Heart left ventricle (tissue), 16 donors: ENCODE measurements at regions of chr11 and their contacts with region 1.

Region 1: DNA sequence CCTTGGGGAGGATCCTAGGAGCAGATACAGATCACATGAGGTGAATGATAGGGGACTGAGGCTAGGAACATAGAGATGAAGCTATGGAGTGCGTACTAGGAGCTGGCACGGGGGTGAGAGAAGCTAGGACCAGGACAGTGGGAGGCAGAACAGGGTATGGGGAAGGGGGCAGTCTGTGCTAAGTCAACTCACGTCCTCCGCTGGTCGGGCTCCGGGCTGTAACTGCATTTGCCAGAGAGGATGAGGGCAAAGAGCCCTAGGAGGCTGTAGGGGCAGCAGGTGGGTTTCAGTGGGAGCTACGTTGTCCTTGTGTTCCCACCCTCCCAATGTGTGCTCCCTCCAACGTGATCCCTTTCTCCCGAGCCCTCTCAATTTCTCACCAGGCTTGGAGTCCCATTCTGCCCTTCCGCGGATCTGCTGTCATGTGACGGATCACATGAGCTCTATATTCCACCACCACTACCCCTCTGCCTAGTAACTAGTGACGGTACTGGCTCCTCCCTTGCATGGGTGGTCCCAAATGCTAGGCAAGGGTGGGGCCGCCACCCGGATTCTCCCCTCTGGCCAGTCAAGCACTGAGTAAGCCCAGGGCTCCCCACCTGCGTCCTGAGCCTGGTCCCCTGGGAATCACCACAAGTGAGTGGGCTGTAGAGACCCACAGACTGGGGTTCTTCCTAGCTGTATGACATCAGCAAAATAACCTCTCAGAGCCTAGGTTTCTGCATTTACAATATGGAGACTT is at the start of gene TPP1:
- DNase-seq: peak; percentile 92 to 95 (median 94)
- ATAC-seq: peak; percentile 94 to 98 (median 97)
- H3K4me3 ChIP-seq: peak within 1 kb of the TSS; percentile 37 to 86 (median 68)
- H3K27ac ChIP-seq: peak within 1 kb of the TSS in 11 of 12 donors; percentile 62 to 94 (median 82)
- H3K4me1 ChIP-seq: peaks cover 0 to 45% (median 20%) of the 10 kb centered on the region in 12 donors
- H3K27me3 ChIP-seq: no peaks in the 10 kb centered on the region
- CTCF ChIP-seq: no peak
- POLR2A ChIP-seq: peak in 1 of 2 donors; percentile 74
- total RNA-seq, gene TPP1: 48.7 to 169 (median 81.2) TPM

Region 2: GRCh38 chr11:6132431-6132830 is 486.7 kb before region 1 on chr11:
- intact Hi-C with region 1: no loop called
- DNase-seq: no peak
- ATAC-seq: no peak
- H3K4me3 ChIP-seq: no peak overlapping the region
- H3K27ac ChIP-seq: no peak overlapping the region
- H3K4me1 ChIP-seq: peaks cover 0 to 14% (median 0%) of the 10 kb centered on the region in 12 donors
- H3K27me3 ChIP-seq: no peaks in the 10 kb centered on the region
- CTCF ChIP-seq: no peak
- POLR2A ChIP-seq: no peak

Region 3: GRCh38 chr11:6587360-6587953 is 31.7 kb before region 1 on chr11:
- intact Hi-C with region 1: no loop called
- DNase-seq: peak in 3 of 5 donors; percentile 54 to 81 (median 73)
- ATAC-seq: peak; percentile 91 to 94 (median 94)
- H3K4me3 ChIP-seq: no peak overlapping the region
- H3K27ac ChIP-seq: peak overlapping the region in 4 of 12 donors; percentile 24 to 64 (median 40)
- H3K4me1 ChIP-seq: peaks cover 0 to 17% (median 7%) of the 10 kb centered on the region in 12 donors
- H3K27me3 ChIP-seq: no peaks in the 10 kb centered on the region
- CTCF ChIP-seq: no peak
- POLR2A ChIP-seq: no peak

Region 4: DNA sequence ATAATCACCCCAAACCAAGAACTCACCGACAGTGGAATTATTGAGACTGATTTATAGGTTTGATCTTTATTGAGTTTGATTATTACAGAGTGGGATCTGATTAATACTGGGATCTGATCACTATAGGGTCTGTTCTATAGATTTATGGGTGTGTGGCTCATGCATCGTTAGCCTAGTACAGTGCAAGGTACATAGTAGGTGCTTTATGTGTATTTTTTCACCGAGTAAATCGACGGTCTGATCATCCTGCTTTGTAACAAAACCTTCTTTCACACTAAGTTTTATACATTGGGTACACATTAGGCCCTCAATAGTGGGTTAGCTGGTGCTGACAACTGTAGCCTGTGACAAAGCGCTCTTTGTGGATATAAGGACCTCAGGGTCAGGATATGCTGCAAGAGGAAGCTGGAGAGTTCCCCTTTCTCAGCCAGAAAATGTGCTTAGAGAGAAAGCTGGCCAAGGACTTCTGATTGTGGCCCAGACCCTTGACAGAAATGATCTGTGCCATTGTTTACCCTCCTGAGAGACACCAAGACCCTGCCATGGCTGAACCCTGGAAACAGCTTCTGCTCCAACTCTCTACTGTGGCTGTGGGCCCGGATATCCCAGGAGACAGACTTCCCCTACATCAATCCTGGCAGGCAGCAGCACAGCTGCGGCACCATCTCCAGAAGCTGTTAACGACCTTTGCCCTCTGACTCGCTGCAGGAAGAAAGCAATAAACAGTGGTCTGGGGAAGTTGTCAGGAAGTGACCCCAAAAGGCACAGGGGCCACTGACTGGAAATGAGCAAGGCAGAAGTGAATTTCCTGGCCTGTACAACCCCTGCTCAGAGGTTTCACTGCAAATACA is 16.1 kb after region 1 on chr11:
- intact Hi-C with region 1: loop called in 1 of 10 experiments (anchors 2 kb)
- DNase-seq: peak; percentile 67 to 84 (median 77)
- ATAC-seq: peak; percentile 39 to 77 (median 62)
- H3K4me3 ChIP-seq: no peak overlapping the region
- H3K27ac ChIP-seq: peak overlapping the region; percentile 2 to 94 (median 68)
- H3K4me1 ChIP-seq: peaks cover 0 to 70% (median 57%) of the 10 kb centered on the region in 12 donors
- H3K27me3 ChIP-seq: no peaks in the 10 kb centered on the region
- CTCF ChIP-seq: no peak
- POLR2A ChIP-seq: no peak